ACHN (cell line): ENCODE measurements at regions of chr2 and their contacts with region 1.

Region 1: GRCh38 chr2:136384531-136385303 is 266.8 kb upstream of the CXCR4 start:
- DNase-seq: peak; percentile 48

Region 2: DNA sequence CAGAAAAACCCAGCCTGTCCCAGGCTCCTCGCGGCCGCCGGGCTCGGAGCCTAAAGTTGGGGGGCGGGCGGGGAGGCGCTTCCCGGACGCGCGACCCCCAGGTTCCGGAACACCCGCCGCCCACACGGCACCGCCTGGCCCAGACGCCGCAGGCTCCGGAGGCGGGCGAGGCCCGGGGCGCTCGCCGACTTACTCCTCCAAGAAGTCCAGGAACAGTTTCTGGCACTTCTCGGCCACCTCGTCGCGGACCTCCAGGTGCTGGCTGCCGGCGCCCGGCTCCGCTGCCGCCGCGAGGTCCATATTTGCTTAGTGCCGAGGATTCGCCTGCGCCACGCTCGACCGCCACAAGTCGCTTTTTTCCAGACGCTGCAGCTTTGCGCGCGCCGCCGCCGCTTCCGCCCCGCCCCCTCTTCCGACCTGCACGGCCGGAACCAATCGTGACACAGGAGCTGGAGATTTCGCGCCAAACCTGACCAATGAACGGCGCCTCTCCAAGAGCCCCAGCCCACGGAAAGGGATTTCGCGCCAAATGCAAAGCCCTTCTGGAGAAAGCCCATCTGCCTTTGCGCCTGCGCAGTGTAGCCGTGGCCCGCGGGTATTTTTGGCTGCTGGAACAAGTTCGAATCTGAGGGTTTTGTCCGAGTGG is 508.5 kb before region 1 on chr2 and contains the start of gene MCM6:
- in situ Hi-C with region 1: loop called (anchors 25 kb)
- DNase-seq: peak; percentile 99